A673 (cell line): ENCODE measurements at regions of chr2 and their contacts with region 1.

Region 1: DNA sequence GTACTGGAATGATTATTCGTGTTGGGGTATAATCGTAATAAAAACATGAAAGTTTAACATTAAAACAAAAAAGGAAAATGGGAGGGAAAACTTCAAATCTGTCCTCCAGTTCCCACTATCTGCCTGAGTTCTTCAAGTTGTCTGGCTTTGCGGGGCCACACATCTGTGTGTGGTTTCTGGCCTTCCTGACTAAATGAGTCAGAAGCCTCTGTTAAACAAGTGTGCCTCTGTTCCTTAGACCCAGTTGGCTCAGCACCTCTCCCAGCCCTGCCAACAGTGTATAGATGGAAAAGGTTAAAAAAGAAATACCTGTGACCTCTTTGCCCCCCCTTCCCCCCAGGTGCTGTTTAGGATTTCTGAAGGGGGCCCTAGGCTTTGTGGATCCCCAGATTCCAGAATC is 30.2 kb downstream of the XDH start:
- DNase-seq: no peak
- H3K4me3 ChIP-seq: no peak overlapping the region
- H3K27ac ChIP-seq: no peak overlapping the region
- H3K4me1 ChIP-seq: no peaks in the 10 kb centered on the region
- H3K27me3 ChIP-seq: no peaks in the 10 kb centered on the region
- CTCF ChIP-seq: no peak

Region 2: GRCh38 chr2:31523871-31524492 is 139.6 kb after region 1 on chr2:
- CTCF ChIA-PET with region 1: no interaction called
- POLR2A ChIA-PET with region 1: no interaction called
- intact Hi-C with region 1: loop called (anchors 10 kb)
- DNase-seq: peak; percentile 72
- H3K4me3 ChIP-seq: no peak overlapping the region
- H3K27ac ChIP-seq: no peak overlapping the region
- H3K4me1 ChIP-seq: no peaks in the 10 kb centered on the region
- H3K27me3 ChIP-seq: peaks cover 16% of the 10 kb centered on the region
- CTCF ChIP-seq: peak; percentile 89